Activated T-helper 1 cell treated with anti-CD3 and anti-CD28 coated beads, Interleukin-12 subunit alpha, Interleukin-12 subunit beta, Interleukin-2, Interleukin-4 antibody, amounts not matched to agents 30 ng/mL and 10 ng/mL and 1 ng/mL, durations not matched to agents 14 hours and 24 hours and 36 hours (primary cell): ENCODE measurements at regions of chr17 and their contacts with region 1.

Region 1: GRCh38 chr17:41864836-41865595 is at the start of gene KLHL11:
- DNase-seq: peak; percentile 88
- H3K4me3 Mint-ChIP-seq: no peak within 1 kb of the TSS
- H3K27ac Mint-ChIP-seq: peak within 1 kb of the TSS; percentile 83
- H3K4me1 Mint-ChIP-seq: peaks cover 32% of the 10 kb centered on the region
- H3K27me3 Mint-ChIP-seq: no peaks in the 10 kb centered on the region
- total RNA-seq, gene KLHL11: 20.0 and 21.7 TPM in 2 replicates

Region 2: GRCh38 chr17:41738077-41738735 is 126.8 kb before region 1 on chr17:
- intact Hi-C with region 1: loop called (anchors 1 kb)
- DNase-seq: peak; percentile 76
- H3K4me3 Mint-ChIP-seq: no peak overlapping the region
- H3K27ac Mint-ChIP-seq: no peak overlapping the region
- H3K4me1 Mint-ChIP-seq: peaks cover 5% of the 10 kb centered on the region
- H3K27me3 Mint-ChIP-seq: peaks cover 34% of the 10 kb centered on the region

Region 3: GRCh38 chr17:41811549-41812380 is 53.3 kb before region 1 on chr17 and contains the start of gene P3H4:
- intact Hi-C with region 1: loop called (anchors 10 kb)
- DNase-seq: peak; percentile 70
- H3K4me3 Mint-ChIP-seq: peak within 1 kb of the TSS; percentile 90
- H3K27ac Mint-ChIP-seq: peak within 1 kb of the TSS; percentile 86
- H3K4me1 Mint-ChIP-seq: peaks cover 14% of the 10 kb centered on the region
- H3K27me3 Mint-ChIP-seq: peaks cover 30% of the 10 kb centered on the region
- total RNA-seq, gene P3H4: 4.1 and 5.0 TPM in 2 replicates

Region 4: DNA sequence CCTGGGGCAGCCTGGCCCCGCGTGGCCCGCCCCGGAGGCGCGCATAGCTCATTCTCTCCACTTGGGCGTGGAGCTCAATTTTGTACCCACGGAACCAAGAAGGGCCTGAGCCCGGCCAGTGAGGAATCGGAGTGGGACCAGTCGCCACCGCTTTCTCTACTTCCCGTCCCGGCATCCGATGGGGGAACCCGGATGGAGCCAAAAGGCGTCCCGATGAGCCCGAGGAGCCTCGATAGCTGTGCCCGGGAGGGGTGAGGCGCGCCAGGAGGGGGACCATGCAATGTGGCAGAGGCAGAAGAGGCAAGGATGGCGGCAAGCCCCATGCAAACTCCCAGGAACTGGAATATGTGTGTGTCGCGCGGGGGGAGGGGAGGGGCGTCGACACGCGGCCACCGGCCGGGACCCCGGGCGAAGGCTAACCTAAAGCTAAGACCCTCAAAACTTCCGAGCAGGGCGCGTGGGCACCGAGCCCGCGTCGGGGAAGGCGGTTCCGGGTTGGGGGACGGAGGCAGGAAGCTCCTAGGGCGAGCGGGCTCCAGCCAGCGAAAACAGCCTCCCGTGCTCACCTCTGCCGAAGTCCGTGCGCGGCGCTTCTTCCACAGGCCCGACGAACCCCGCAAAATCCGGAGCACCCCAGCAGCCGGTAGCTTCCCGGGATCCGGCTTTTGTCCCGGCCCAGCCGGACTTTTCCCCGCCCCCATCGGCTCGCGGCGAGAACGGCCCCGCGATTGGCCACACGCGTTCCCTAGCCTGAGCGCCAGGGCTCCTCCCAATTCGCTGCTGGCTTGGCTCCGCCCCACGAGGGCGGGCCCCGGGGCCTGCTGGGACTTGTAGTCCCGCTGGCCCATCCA is 53.5 kb after region 1 on chr17 and contains the start of gene ACLY:
- intact Hi-C with region 1: loop called (anchors 1 kb)
- DNase-seq: peak; percentile 98
- H3K4me3 Mint-ChIP-seq: peak within 1 kb of the TSS; percentile 95
- H3K27ac Mint-ChIP-seq: peak within 1 kb of the TSS; percentile 90
- H3K4me1 Mint-ChIP-seq: peaks cover 32% of the 10 kb centered on the region
- H3K27me3 Mint-ChIP-seq: no peaks in the 10 kb centered on the region
- total RNA-seq, gene ACLY: 200 and 211 TPM in 2 replicates

Region 5: DNA sequence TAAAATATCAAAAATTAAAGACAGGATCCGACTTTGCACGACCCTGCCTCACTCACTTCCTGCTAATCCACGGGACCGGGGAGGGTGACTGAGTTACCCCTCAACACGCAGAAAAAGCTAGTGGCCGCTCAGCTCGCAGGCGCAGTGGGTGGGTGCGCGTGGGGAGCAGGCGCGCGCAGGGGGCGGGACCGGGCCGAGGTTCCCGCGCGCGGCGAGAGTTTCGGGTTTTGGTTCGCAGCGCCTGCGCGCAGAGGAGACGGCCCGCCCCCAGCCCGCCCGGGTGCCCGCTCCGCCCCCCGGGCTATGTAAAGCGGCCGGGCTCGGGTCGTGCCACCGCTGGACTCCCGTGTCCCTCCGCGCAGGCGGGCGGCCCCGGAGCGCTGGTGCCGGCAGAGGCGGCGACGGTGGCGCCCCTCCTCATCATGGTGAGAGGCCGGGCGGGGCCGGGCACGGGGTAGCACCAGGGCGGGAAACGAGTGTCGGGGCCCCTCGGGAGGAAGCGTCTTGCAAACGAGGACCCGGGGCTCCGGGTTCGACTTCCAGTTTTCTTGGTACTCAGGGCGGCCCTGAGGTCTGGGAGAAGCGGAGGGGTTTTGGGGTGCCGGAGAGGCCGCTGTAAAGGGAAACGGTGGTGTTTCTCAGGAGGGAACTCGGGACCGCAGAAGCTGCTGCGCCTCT is 101.6 kb after region 1 on chr17 and contains the start of gene CNP:
- intact Hi-C with region 1: loop called (anchors 2 kb)
- DNase-seq: peak; percentile 87
- H3K4me3 Mint-ChIP-seq: peak within 1 kb of the TSS; percentile 87
- H3K27ac Mint-ChIP-seq: peak within 1 kb of the TSS; percentile 82
- H3K4me1 Mint-ChIP-seq: peaks cover 29% of the 10 kb centered on the region
- H3K27me3 Mint-ChIP-seq: no peaks in the 10 kb centered on the region
- total RNA-seq, gene CNP: 89.1 and 89.8 TPM in 2 replicates